ENCODE measurements at regions of chr7 and their contacts with region 1.

Region 1: GRCh38 chr7:45259966-45260646 is 102.5 kb downstream of the RAMP3 start:
- DNase-seq: peak; percentile 86
- H3K4me3 ChIP-seq: peak overlapping the region in 1 of 2 experiments; percentile 20; a peak in 1 of 4 replicates
- H3K27ac ChIP-seq: no peak overlapping the region
- H3K4me1 ChIP-seq: peaks cover 0 to 11% of the 10 kb centered on the region in 2 experiments; a peak in 1 of 4 replicates
- H3K27me3 ChIP-seq: peaks cover 13% of the 10 kb centered on the region; the same call in 1 of the 2 replicates
- CTCF ChIP-seq: peak; percentile 100
- EP300 ChIP-seq: no peak
- RAD21 ChIP-seq: peak; percentile 88

Region 2: GRCh38 chr7:45162943-45163691 is 97.0 kb before region 1 on chr7:
- CTCF ChIA-PET with region 1: interaction called, 201 read pairs
- POLR2A ChIA-PET with region 1: no interaction called
- DNase-seq: no peak
- H3K4me3 ChIP-seq: no peak overlapping the region
- H3K27ac ChIP-seq: no peak overlapping the region
- H3K4me1 ChIP-seq: peaks cover 0 to 12% of the 10 kb centered on the region in 2 experiments; a peak in 1 of 4 replicates
- H3K27me3 ChIP-seq: peaks cover 12% of the 10 kb centered on the region
- CTCF ChIP-seq: no peak
- EP300 ChIP-seq: no peak
- RAD21 ChIP-seq: no peak

Region 3: GRCh38 chr7:45203936-45204445 is 56.1 kb before region 1 on chr7:
- CTCF ChIA-PET with region 1: interaction called, 12 read pairs
- POLR2A ChIA-PET with region 1: no interaction called
- DNase-seq: no peak
- H3K4me3 ChIP-seq: no peak overlapping the region
- H3K27ac ChIP-seq: no peak overlapping the region
- H3K4me1 ChIP-seq: no peaks in the 10 kb centered on the region
- H3K27me3 ChIP-seq: peaks cover 37% of the 10 kb centered on the region
- CTCF ChIP-seq: no peak
- EP300 ChIP-seq: no peak
- RAD21 ChIP-seq: no peak

Region 4: DNA sequence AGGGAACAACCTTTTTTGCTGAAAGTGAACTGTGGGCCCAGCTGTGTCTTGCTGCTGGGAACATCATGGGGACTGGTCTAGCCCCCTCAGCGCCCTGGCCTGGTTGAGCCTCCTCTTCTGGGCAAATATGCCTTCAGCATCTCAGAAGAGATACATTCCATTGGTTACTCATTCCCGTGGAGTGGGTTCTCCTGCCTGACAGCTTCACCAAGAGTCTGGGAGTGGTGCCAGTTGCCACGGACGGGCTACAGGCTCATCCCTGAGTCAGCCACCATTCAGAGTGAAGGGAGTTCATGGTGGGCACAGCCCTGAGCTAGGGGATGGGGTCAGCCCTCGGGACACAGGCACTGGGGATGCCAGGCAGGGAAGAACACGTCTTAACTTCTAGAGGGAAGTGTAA is 20.6 kb before region 1 on chr7:
- CTCF ChIA-PET with region 1: interaction called, 15 read pairs
- POLR2A ChIA-PET with region 1: no interaction called
- DNase-seq: no peak
- H3K4me3 ChIP-seq: no peak overlapping the region
- H3K27ac ChIP-seq: no peak overlapping the region
- H3K4me1 ChIP-seq: peaks cover 7 to 8% of the 10 kb centered on the region in 2 experiments; a peak in 1 of 4 replicates
- H3K27me3 ChIP-seq: no peaks in the 10 kb centered on the region; the same call in 1 of the 2 replicates
- CTCF ChIP-seq: no peak
- EP300 ChIP-seq: no peak
- RAD21 ChIP-seq: no peak

Region 5: GRCh38 chr7:45295222-45295621 is 35.1 kb after region 1 on chr7:
- CTCF ChIA-PET with region 1: interaction called, 12 read pairs
- POLR2A ChIA-PET with region 1: no interaction called
- DNase-seq: peak; percentile 39
- H3K4me3 ChIP-seq: no peak overlapping the region
- H3K27ac ChIP-seq: peak overlapping the region in 1 of 2 experiments; percentile 89; a peak in 2 of 4 replicates
- H3K4me1 ChIP-seq: peaks cover 0 to 44% of the 10 kb centered on the region in 2 experiments; a peak in 1 of 4 replicates
- H3K27me3 ChIP-seq: no peaks in the 10 kb centered on the region
- CTCF ChIP-seq: no peak
- EP300 ChIP-seq: peak in 1 of 2 experiments; percentile 73; a peak in 2 of 4 replicates
- RAD21 ChIP-seq: no peak

Measured in SK-N-SH (cell line).